Naive thymus-derived CD4-positive, alpha-beta T cell (primary cell): ENCODE measurements at regions of chr17 and their contacts with region 1.

Region 1: GRCh38 chr17:2346510-2346909 is 9.2 kb downstream of the SGSM2 start:
- DNase-seq: no peak
- ATAC-seq: no peak
- H3K4me3 ChIP-seq: no peak overlapping the region
- H3K4me3 Mint-ChIP-seq: no peak overlapping the region
- H3K27ac ChIP-seq: no peak overlapping the region
- H3K27ac Mint-ChIP-seq: no peak overlapping the region
- H3K4me1 ChIP-seq: no peaks in the 10 kb centered on the region
- H3K4me1 Mint-ChIP-seq: peaks cover 3 to 13% (median 8%) of the 10 kb centered on the region in 7 donors
- H3K27me3 ChIP-seq: no peaks in the 10 kb centered on the region
- H3K27me3 Mint-ChIP-seq: no peaks in the 10 kb centered on the region

Region 2: DNA sequence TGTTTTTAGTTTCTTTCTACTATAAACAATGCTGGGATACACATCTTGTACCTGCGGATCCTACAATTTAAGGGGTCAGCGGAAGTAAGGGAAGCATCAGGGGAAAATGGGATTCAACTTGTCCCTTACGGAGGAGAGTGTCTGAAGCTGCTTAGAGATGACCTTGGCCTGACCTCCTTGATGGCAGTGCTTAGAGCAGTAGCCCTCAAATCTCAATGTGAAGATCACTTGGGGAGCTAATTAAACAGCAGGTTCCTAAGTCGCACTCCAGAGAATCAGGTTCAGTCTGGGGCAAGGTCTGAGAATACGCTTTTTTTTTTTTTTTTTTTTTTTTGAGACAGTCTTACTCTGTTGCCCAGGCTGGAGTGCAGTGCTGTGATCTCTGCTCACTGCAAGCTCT is 174.7 kb after region 1 on chr17:
- CTCF ChIA-PET with region 1: interaction called, 10 read pairs
- POLR2A ChIA-PET with region 1: no interaction called
- intact Hi-C with region 1: no loop called
- DNase-seq: no peak
- ATAC-seq: no peak
- H3K4me3 ChIP-seq: no peak overlapping the region
- H3K4me3 Mint-ChIP-seq: no peak overlapping the region
- H3K27ac ChIP-seq: no peak overlapping the region
- H3K27ac Mint-ChIP-seq: no peak overlapping the region
- H3K4me1 ChIP-seq: no peaks in the 10 kb centered on the region
- H3K4me1 Mint-ChIP-seq: peaks cover 0 to 3% (median 0%) of the 10 kb centered on the region in 7 donors
- H3K27me3 ChIP-seq: no peaks in the 10 kb centered on the region
- H3K27me3 Mint-ChIP-seq: peaks cover 0 to 4% (median 0%) of the 10 kb centered on the region in 5 donors